OCI-LY7 (cell line): ENCODE measurements at regions of chr5 and their contacts with region 1.

Region 1: DNA sequence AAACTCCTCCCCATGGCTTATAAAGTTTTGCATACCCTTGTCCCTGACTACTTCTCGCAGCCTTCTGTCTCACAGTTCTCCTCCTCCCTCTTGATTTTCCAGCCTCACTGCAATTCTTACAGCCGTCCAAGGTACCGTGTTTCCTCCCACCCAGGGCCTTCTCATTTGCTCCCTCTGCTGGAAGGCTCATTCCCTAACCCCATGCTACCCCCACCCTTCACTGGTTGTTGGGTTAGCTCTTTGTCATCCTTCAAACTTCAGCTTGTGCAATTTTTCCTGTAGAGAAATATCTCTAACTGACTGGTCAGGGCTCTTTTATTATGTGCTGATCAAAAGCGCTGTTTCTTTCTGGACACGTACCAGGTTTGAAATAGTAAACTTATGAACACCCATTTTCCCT is 329.2 kb downstream of the EBF1 start:
- DNase-seq: peak; percentile 65
- H3K4me3 ChIP-seq: no peak overlapping the region
- H3K27ac ChIP-seq: peak overlapping the region; percentile 23
- H3K4me1 ChIP-seq: peaks cover 83% of the 10 kb centered on the region
- CTCF ChIP-seq: peak; percentile 82

Region 2: DNA sequence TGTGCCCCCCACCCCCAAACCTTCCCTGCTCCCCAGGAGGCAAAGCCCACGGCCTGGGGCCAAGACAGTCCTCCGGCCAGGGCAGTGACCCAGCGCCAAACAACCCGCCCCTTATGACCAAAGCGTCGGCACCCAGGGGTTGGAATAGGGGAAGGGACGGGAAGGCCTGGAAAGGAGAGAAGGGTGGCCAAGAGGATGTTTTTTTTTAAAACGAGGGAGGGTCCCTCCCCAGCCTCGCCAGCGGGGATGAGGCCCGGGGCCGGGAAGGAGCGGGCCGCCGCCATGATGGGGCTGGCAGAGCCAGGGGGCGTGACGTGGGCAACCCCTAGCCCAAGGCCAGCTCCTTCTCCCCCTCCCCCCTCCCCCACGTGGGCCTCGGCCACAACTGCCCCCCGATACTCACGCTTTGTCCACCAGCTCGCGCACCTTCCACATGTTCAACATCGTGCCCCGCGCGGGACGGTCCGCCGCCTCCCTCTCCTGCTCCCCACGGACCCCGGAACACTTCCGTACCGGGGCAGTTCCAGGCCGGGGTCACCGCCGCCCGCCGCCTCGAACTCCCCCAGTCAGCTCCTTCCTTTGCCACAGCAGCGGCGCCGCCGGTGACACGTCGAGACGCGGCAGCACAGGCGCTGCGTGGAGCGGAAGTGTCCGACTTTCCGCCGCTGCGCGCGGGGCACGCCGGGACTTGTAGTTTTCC is 911.8 kb before region 1 on chr5 and contains the start of gene CLINT1:
- CTCF ChIA-PET with region 1: no interaction called
- POLR2A ChIA-PET with region 1: no interaction called
- intact Hi-C with region 1: no loop called
- DNase-seq: peak; percentile 94
- H3K4me3 ChIP-seq: peak within 1 kb of the TSS; percentile 96
- H3K27ac ChIP-seq: peak within 1 kb of the TSS; percentile 97
- H3K4me1 ChIP-seq: peaks cover 81% of the 10 kb centered on the region
- CTCF ChIP-seq: no peak
- total RNA-seq, gene CLINT1: 86.1 and 107 TPM in 2 replicates

Region 3: GRCh38 chr5:158390577-158390976 is 379.9 kb before region 1 on chr5:
- CTCF ChIA-PET with region 1: no interaction called
- POLR2A ChIA-PET with region 1: no interaction called
- intact Hi-C with region 1: loop called (anchors 10 kb)
- DNase-seq: peak; percentile 46
- H3K4me3 ChIP-seq: no peak overlapping the region
- H3K27ac ChIP-seq: no peak overlapping the region
- H3K4me1 ChIP-seq: peaks cover 11% of the 10 kb centered on the region
- CTCF ChIP-seq: no peak

Region 4: DNA sequence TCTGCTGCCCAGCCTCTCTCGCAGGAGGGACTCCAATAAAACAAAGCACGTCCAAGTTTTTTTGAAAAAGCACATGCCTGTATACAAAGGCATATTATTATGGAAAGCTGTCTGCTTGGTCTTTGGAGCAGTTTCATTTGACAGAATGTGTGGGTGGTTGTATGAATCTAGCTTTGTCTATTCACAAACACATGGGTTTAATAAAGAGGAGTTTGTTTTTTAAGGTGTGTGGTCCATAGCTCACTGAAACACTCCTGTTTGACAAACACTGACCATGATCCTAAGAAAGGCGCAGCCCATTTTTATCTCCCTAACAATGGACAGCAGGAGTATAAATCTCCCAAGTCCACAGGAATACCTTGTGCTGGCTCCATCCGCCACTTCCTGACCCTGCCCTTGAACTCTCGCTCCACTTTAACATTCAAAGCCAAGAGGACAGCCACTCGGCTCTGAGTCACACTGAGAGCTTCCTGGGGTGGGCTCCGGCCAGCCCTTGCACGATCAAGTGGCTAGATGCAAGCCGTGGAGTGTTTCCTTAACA is 42.7 kb before region 1 on chr5:
- CTCF ChIA-PET with region 1: no interaction called
- POLR2A ChIA-PET with region 1: no interaction called
- intact Hi-C with region 1: no loop called
- DNase-seq: no peak
- H3K4me3 ChIP-seq: no peak overlapping the region
- H3K27ac ChIP-seq: no peak overlapping the region
- H3K4me1 ChIP-seq: no peaks in the 10 kb centered on the region
- CTCF ChIP-seq: no peak

Region 5: GRCh38 chr5:158751961-158752655 is 18.4 kb before region 1 on chr5:
- CTCF ChIA-PET with region 1: no interaction called
- POLR2A ChIA-PET with region 1: interaction called, 38 read pairs
- intact Hi-C with region 1: loop called (anchors 1 kb)
- DNase-seq: peak; percentile 91
- H3K4me3 ChIP-seq: peak overlapping the region; percentile 57
- H3K27ac ChIP-seq: peak overlapping the region; percentile 99
- H3K4me1 ChIP-seq: peaks cover 83% of the 10 kb centered on the region
- CTCF ChIP-seq: no peak

Region 6: GRCh38 chr5:158758675-158759074 is 11.8 kb before region 1 on chr5:
- CTCF ChIA-PET with region 1: interaction called, 3 read pairs
- POLR2A ChIA-PET with region 1: interaction called, 38 read pairs
- intact Hi-C with region 1: loop called (anchors 1 kb)
- DNase-seq: no peak
- H3K4me3 ChIP-seq: no peak overlapping the region
- H3K27ac ChIP-seq: no peak overlapping the region
- H3K4me1 ChIP-seq: peaks cover 38% of the 10 kb centered on the region
- CTCF ChIP-seq: no peak

Region 7: DNA sequence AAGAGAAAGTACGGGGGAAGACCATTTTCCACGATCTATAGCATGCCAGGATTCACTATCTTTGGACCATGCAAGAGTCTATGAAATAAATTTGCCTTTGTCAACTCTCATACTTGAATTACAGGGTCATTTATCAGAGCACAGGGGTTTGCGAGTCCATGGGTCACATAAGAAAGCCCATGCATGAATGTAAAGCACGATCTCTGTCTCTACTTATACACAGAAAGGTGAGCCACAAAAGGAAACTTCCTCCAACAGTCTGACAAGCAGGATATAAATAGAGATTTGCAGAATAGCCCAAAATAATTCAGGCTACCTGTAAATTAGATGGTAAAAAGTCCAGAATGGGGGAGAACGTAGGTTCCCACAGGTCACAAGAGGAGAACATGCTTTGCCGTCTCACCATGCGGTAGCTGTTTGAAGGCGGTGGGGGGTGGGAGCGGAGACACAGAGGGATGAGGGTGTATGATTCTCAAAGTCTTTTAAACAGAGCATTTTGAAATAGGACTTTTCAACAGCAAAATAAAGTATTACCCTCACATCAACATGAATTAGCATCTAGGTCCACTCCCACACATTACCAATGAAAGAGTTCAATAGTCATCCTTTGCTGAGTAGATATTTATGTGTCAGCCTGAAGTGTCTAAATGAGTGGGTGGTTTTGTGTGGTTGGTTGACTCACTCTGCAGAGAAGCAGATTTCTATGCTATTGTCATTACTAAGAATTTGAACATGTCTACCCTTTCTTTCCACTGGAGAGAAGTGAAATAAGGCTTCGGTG is 49.5 kb after region 1 on chr5:
- CTCF ChIA-PET with region 1: interaction called, 3 read pairs
- POLR2A ChIA-PET with region 1: interaction called, 12 read pairs
- intact Hi-C with region 1: no loop called
- DNase-seq: peak; percentile 52
- H3K4me3 ChIP-seq: peak overlapping the region; percentile 47
- H3K27ac ChIP-seq: peak overlapping the region; percentile 94
- H3K4me1 ChIP-seq: peaks cover 98% of the 10 kb centered on the region
- CTCF ChIP-seq: no peak

Region 8: GRCh38 chr5:158875272-158875679 is 104.8 kb after region 1 on chr5:
- CTCF ChIA-PET with region 1: no interaction called
- POLR2A ChIA-PET with region 1: interaction called, 4 read pairs
- intact Hi-C with region 1: loop called (anchors 2 kb)
- DNase-seq: peak; percentile 57
- H3K4me3 ChIP-seq: peak overlapping the region; percentile 60
- H3K27ac ChIP-seq: peak overlapping the region; percentile 92
- H3K4me1 ChIP-seq: peaks cover 74% of the 10 kb centered on the region
- CTCF ChIP-seq: no peak